SK-N-SH (cell line): ENCODE measurements at regions of chr3 and their contacts with region 1.

Region 1: GRCh38 chr3:81910244-81910852 is 148.9 kb upstream of the GBE1 start:
- DNase-seq: peak; percentile 25
- H3K4me3 ChIP-seq: peak overlapping the region in 1 of 2 experiments; percentile 12; a peak in 1 of 4 replicates
- H3K27ac ChIP-seq: no peak overlapping the region
- H3K4me1 ChIP-seq: 0 out of 4 replicates have a peak, but pooled peaks cover 0 to 4% of the 10 kb centered on the region in 2 experiments
- H3K27me3 ChIP-seq: no peaks in the 10 kb centered on the region
- CTCF ChIP-seq: peak; percentile 88
- EP300 ChIP-seq: no peak
- RAD21 ChIP-seq: peak; percentile 66

Region 2: DNA sequence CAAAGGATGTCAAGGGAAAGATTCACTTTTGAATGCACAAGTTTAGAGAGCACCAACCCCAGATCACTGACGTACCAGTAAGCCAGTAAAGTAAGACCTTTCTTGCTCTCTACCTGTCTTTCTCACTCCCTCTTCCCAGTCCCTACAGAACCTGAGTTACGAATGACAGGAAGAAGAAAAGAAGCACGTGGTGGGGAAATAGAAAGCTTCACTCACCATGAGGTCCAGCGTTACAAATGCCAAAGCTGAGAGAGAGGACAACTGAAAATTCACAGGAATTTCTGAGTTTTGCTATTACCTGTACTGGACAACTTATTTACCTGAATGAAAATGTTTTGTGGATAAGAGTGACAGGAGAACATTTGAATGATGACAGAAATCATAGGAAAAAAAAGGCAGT is 15.8 kb before region 1 on chr3:
- CTCF ChIA-PET with region 1: interaction called, 19 read pairs
- POLR2A ChIA-PET with region 1: no interaction called
- DNase-seq: no peak
- H3K4me3 ChIP-seq: no peak overlapping the region
- H3K27ac ChIP-seq: no peak overlapping the region
- H3K4me1 ChIP-seq: no peaks in the 10 kb centered on the region
- H3K27me3 ChIP-seq: no peaks in the 10 kb centered on the region
- CTCF ChIP-seq: no peak
- EP300 ChIP-seq: no peak
- RAD21 ChIP-seq: no peak

Region 3: GRCh38 chr3:81920816-81921215 is 10.5 kb after region 1 on chr3:
- CTCF ChIA-PET with region 1: interaction called, 13 read pairs
- POLR2A ChIA-PET with region 1: no interaction called
- DNase-seq: peak; percentile 12
- H3K4me3 ChIP-seq: no peak overlapping the region
- H3K27ac ChIP-seq: no peak overlapping the region
- H3K4me1 ChIP-seq: peaks cover 0 to 4% of the 10 kb centered on the region in 2 experiments; a peak in 2 of 4 replicates
- H3K27me3 ChIP-seq: no peaks in the 10 kb centered on the region; the same call in 1 of the 2 replicates
- CTCF ChIP-seq: no peak
- EP300 ChIP-seq: peak in 1 of 2 experiments; percentile 37; a peak in 1 of 4 replicates
- RAD21 ChIP-seq: no peak

Region 4: GRCh38 chr3:82078246-82078645 is 167.9 kb after region 1 on chr3:
- CTCF ChIA-PET with region 1: no interaction called
- POLR2A ChIA-PET with region 1: no interaction called
- DNase-seq: no peak
- H3K4me3 ChIP-seq: no peak overlapping the region
- H3K27ac ChIP-seq: no peak overlapping the region
- H3K4me1 ChIP-seq: peaks cover 0 to 13% of the 10 kb centered on the region in 2 experiments; a peak in 2 of 4 replicates
- H3K27me3 ChIP-seq: no peaks in the 10 kb centered on the region
- CTCF ChIP-seq: no peak
- EP300 ChIP-seq: no peak
- RAD21 ChIP-seq: no peak